Activated CD4-positive, alpha-beta memory T cell treated with anti-CD3 and anti-CD28 coated beads for 36 hours (primary cell): ENCODE measurements at regions of chr9 and their contacts with region 1.

Region 1: GRCh38 chr9:3732077-3733038 is 206.6 kb upstream of the RFX3 start:
- DNase-seq: peak; percentile 24
- H3K4me3 Mint-ChIP-seq: peak overlapping the region; percentile 5
- H3K27ac Mint-ChIP-seq: no peak overlapping the region
- H3K4me1 Mint-ChIP-seq: peaks cover 22% of the 10 kb centered on the region
- H3K27me3 Mint-ChIP-seq: no peaks in the 10 kb centered on the region

Region 2: DNA sequence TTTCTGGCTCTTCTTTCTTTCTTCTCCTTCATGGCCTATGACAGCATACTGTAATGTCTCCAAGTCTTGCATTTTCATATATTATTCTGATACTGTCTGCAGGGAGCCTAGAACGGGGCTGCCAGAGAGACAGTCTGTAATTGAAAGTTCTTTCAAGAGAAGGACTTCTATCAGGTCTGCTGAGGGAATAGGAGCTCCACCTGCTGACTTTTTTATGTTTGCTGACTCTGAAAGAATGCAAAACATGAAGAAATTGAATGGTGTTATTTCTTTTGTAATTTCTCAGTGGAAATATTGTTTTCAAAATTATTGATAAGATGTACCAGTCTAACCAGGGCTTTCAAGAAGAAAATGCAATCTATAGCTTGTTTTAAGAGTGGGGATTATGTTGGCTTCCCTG is 84.7 kb before region 1 on chr9:
- CTCF ChIA-PET with region 1: no interaction called
- POLR2A ChIA-PET with region 1: no interaction called
- intact Hi-C with region 1: no loop called
- DNase-seq: no peak
- H3K4me3 Mint-ChIP-seq: no peak overlapping the region
- H3K27ac Mint-ChIP-seq: no peak overlapping the region
- H3K4me1 Mint-ChIP-seq: no peaks in the 10 kb centered on the region
- H3K27me3 Mint-ChIP-seq: no peaks in the 10 kb centered on the region

Region 3: DNA sequence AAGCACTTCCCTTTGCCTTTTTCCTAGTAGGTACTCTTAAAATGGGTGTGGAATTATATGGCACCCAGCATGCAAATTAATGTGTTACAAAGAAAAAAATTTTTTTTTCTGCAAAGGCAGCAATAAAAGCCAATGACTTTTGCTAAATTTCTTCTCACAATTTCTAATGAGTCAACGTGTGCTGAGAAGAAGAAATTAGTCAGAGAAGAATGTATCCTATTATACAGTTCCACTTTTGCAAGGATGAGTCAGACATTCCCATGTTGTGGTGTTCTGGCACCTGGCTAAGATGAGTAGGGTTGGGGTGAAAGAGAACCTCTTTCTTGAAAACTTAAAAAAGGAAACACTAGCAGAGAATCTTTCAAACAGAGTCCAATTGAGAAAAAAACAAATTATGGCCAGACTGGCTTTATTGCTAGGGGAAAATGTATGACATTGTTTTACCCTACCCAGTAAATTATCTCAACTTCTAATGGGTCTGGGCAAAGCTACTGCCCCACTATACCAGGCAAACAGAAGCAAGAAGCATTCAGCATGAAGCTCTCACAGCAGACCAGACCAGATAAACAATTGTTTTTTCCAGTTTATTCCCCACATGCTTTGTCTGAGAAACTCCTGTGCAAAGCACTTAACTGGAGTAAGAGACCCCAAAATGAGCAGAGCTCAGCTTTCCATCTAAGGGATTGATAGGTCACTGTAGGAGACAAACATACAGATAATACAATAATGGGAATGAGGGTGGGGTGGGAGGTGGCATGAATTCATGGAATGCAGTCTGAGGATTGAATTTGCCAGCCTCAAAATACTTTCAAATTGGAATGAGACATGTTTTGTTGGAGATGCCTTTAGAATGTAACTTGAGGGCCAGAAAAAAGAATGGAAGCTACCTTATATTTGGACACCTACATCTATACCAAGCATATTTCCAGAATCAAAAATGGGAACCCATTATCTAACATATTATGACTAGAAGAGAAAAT is 14.2 kb after region 1 on chr9:
- CTCF ChIA-PET with region 1: interaction called, 12 read pairs
- POLR2A ChIA-PET with region 1: no interaction called
- intact Hi-C with region 1: loop called (anchors 1 kb)
- DNase-seq: peak; percentile 68
- H3K4me3 Mint-ChIP-seq: no peak overlapping the region
- H3K27ac Mint-ChIP-seq: peak overlapping the region; percentile 57
- H3K4me1 Mint-ChIP-seq: peaks cover 23% of the 10 kb centered on the region
- H3K27me3 Mint-ChIP-seq: peaks cover 3% of the 10 kb centered on the region

Region 4: GRCh38 chr9:3842839-3843238 is 110.5 kb after region 1 on chr9:
- CTCF ChIA-PET with region 1: no interaction called
- POLR2A ChIA-PET with region 1: no interaction called
- intact Hi-C with region 1: no loop called
- DNase-seq: no peak
- H3K4me3 Mint-ChIP-seq: no peak overlapping the region
- H3K27ac Mint-ChIP-seq: no peak overlapping the region
- H3K4me1 Mint-ChIP-seq: no peaks in the 10 kb centered on the region
- H3K27me3 Mint-ChIP-seq: no peaks in the 10 kb centered on the region

Region 5: GRCh38 chr9:4117835-4118610 is 385.7 kb after region 1 on chr9:
- CTCF ChIA-PET with region 1: interaction called, 17 read pairs
- POLR2A ChIA-PET with region 1: no interaction called
- intact Hi-C with region 1: loop called (anchors 1 kb)
- DNase-seq: peak; percentile 65
- H3K4me3 Mint-ChIP-seq: no peak overlapping the region
- H3K27ac Mint-ChIP-seq: no peak overlapping the region
- H3K4me1 Mint-ChIP-seq: no peaks in the 10 kb centered on the region
- H3K27me3 Mint-ChIP-seq: no peaks in the 10 kb centered on the region

Region 6: DNA sequence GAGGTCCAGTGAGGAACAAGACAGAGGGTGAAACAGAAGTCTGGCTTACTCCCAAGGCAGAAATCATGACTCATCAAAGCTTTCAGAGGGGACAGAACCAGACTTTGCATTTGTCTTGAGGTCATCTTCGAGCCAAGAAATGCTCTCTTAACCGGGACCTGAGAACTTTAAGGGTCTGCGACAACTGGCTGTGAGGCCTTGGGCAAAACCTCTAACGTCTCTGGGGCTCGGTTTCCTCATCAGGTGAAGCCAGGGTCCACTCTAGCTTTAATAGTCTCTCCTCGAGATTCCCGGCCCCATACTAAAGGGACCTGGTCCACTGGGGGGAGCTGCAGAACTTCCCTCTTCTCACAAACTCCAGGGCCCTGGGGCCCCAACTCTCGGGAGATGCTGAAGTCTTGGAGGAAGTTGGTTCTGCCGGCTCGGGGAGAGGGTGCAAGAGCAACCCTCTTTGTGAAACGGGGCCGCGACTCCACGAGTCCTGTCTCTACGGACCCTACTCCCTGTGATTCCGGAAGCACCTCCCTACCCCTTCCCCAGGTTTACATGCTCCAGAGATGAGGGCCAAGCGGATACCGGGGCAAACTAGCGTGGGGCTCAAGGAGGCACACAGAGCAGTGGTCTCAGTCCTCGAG is 564.9 kb after region 1 on chr9:
- CTCF ChIA-PET with region 1: interaction called, 3 read pairs
- POLR2A ChIA-PET with region 1: no interaction called
- intact Hi-C with region 1: loop called (anchors 1 kb)
- DNase-seq: peak; percentile 66
- H3K4me3 Mint-ChIP-seq: peak overlapping the region; percentile 89
- H3K27ac Mint-ChIP-seq: peak overlapping the region; percentile 59
- H3K4me1 Mint-ChIP-seq: peaks cover 27% of the 10 kb centered on the region
- H3K27me3 Mint-ChIP-seq: peaks cover 37% of the 10 kb centered on the region

Region 7: GRCh38 chr9:4366591-4367330 is 634.4 kb after region 1 on chr9:
- CTCF ChIA-PET with region 1: interaction called, 4 read pairs
- POLR2A ChIA-PET with region 1: no interaction called
- intact Hi-C with region 1: loop called (anchors 5 kb)
- DNase-seq: peak; percentile 45
- H3K4me3 Mint-ChIP-seq: no peak overlapping the region
- H3K27ac Mint-ChIP-seq: no peak overlapping the region
- H3K4me1 Mint-ChIP-seq: peaks cover 2% of the 10 kb centered on the region
- H3K27me3 Mint-ChIP-seq: peaks cover 6% of the 10 kb centered on the region